ENCODE measurements at regions of chr19 and their contacts with region 1.

Region 1: GRCh38 chr19:55383789-55384577 is at the start of gene TMEM238:
- DNase-seq: peak in 1 of 2 donors; percentile 38
- H3K4me3 ChIP-seq: peak within 1 kb of the TSS; percentile 77 to 89 (median 85)
- H3K27ac ChIP-seq: peak within 1 kb of the TSS; percentile 91 to 96
- H3K4me1 ChIP-seq: peaks cover 18 to 25% of the 10 kb centered on the region in 2 donors
- H3K27me3 ChIP-seq: no peaks in the 10 kb centered on the region
- CTCF ChIP-seq: peak in 1 of 3 donors; percentile 23
- POLR2A ChIP-seq: no peak
- total RNA-seq, gene TMEM238: 4.5 to 12.7 (median 9.8) TPM

Region 2: DNA sequence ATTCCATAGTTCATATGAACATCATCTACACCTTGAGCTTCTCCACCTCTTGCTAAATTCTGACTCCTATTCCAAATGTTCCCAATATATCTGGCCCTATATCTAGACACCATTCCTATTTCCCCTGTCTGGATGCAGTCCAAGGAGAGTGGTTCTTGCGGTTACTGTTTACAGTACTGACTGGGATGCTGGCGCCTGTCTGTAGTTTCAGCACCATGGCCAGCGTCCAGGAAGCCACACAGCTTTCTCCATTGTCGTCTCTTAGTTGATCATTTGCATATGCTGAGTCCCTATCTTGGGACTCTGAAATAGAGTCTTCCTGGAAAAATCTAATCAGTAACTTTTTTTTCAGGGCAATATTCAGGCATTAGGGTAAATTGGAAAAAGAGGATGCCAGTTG is 866.5 kb before region 1 on chr19:
- intact Hi-C with region 1: loop called (anchors 5 kb)
- DNase-seq: peak; percentile 19 to 63
- H3K4me3 ChIP-seq: no peak overlapping the region
- H3K27ac ChIP-seq: no peak overlapping the region
- H3K4me1 ChIP-seq: no peaks in the 10 kb centered on the region
- H3K27me3 ChIP-seq: peaks cover 0 to 43% of the 10 kb centered on the region in 2 donors
- CTCF ChIP-seq: no peak
- POLR2A ChIP-seq: no peak

Region 3: DNA sequence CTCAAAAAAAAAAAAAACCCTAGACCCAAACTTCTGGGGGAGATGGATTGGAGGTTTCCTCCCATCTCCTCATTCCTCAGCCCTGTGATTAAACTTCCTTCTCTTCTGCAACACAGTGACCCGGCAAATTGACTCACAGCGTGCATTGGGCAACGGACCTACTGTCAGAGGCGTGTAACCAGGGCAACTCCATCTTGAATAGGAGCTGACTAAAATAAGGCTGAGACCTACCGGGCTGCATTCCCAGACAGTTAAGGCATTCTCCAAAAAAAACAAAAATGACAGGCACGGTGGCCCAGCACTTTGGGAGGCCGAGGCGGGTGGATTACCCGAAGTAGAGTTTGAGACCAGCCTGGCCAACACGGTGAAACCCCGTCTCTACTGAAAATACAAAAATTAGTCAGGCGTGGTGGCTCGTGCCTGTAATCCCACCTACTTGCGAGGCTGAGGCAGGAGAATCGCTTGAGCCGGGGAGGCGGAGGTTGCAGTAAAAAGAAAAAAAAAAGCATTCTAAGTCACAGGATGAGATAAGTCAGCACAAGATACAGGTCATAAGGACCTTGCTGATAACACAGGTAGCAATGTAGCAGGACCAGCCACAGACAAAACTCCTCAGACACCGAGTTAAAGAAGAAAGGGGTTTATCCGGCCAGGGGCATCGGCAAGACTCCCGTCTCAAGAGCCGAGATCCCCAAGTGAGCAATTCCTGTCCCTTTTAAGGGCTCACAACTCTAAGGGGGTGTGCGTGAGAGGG is 431.2 kb before region 1 on chr19:
- intact Hi-C with region 1: no loop called
- DNase-seq: no peak
- H3K4me3 ChIP-seq: no peak overlapping the region
- H3K27ac ChIP-seq: no peak overlapping the region
- H3K4me1 ChIP-seq: no peaks in the 10 kb centered on the region
- H3K27me3 ChIP-seq: no peaks in the 10 kb centered on the region
- CTCF ChIP-seq: no peak
- POLR2A ChIP-seq: no peak

Region 4: GRCh38 chr19:55041617-55042349 is 342.2 kb before region 1 on chr19:
- intact Hi-C with region 1: no loop called
- DNase-seq: no peak
- H3K4me3 ChIP-seq: no peak overlapping the region
- H3K27ac ChIP-seq: no peak overlapping the region
- H3K4me1 ChIP-seq: no peaks in the 10 kb centered on the region
- H3K27me3 ChIP-seq: no peaks in the 10 kb centered on the region
- CTCF ChIP-seq: no peak
- POLR2A ChIP-seq: no peak

Region 5: DNA sequence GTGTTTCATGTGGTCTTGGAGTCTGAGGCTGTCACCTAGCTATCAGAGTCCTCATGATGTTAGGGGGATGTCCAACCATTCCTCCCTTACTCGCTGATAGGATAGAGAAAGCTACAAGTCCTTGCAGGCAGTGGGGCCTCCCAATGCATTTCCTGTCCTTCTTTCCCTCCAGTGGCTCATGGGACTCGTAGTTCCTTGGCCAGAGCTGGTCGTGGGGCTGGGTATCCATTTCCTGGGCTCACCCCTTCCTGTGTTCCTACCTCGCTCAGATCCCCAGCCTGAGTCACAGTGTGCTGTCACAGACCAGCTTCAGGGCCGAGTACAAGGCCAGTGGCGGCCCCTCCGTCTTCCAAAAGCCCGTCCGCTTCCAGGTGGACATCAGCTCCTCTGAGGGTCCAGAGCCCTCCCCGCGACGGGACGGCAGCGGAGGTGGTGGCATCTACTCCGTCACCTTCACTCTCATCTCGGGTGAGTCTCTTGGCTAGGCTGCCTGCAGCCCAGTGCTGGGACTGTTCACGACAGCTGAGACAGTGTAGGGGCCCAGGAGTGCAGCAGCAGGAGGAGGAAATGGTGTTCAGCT is 77.9 kb before region 1 on chr19:
- intact Hi-C with region 1: loop called (anchors 1 kb)
- DNase-seq: no peak
- H3K4me3 ChIP-seq: no peak overlapping the region
- H3K27ac ChIP-seq: no peak overlapping the region
- H3K4me1 ChIP-seq: no peaks in the 10 kb centered on the region
- H3K27me3 ChIP-seq: no peaks in the 10 kb centered on the region
- CTCF ChIP-seq: no peak
- POLR2A ChIP-seq: no peak